ENCODE measurements at regions of chr15 and their contacts with region 1.

Region 1: DNA sequence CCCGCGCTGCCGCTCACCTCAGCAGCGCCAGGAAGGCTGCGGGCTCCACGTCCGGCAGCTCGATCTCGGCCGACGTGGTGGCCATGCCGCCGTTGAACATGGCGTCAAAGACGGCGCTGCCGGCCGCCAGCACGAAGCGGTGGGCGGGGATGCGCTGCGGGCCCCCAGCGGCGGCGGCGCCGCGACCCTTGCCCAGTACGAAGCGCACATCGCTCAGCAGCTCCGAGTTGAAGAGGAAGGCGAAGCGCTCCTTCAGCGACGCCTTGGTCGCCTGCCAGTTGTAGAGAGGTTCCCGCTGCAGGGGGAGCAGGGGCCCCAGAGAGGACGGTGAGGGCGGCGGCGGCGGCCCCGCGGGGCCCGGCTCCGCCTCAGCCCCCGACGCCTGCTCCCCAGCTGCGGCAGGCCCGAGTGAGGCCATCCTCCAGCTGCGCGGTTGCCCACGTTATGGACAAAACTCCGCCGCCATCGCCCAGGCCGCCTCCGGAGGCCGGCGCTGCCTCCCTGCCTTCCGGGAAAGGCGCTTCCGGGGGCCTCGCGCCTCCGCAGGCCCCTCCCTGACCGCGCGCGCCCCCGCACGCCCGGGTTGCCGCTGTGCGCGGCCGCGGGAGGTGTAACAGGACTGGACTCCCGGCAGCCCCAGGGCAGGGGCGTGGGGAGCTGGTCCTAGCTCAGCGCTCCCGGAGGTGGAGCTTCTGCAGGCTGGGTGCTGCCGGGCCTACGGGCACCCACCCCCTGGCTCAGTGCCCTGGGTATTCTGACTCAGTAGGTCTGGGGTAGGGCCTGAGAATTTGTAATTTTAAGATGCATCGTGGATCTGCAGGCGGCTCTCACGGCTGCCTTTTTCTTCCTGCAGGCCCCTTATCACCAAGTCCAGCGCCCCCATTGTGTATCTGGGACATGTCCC is at the start of gene BTBD1:
- DNase-seq: peak; percentile 96
- ATAC-seq: peak; percentile 98
- H3K4me3 Mint-ChIP-seq: peak within 1 kb of the TSS; percentile 79
- H3K27ac Mint-ChIP-seq: peak within 1 kb of the TSS; percentile 86
- H3K4me1 Mint-ChIP-seq: peaks cover 20% of the 10 kb centered on the region
- H3K27me3 Mint-ChIP-seq: no peaks in the 10 kb centered on the region
- total RNA-seq, gene BTBD1: 58.3 to 77.6 TPM

Region 2: GRCh38 chr15:82540055-82540983 is 526.7 kb before region 1 on chr15 and contains the start of gene RPS17:
- CTCF ChIA-PET with region 1: no interaction called
- POLR2A ChIA-PET with region 1: interaction called, 4 read pairs
- intact Hi-C with region 1: loop called (anchors 1 to 2 kb)
- DNase-seq: peak; percentile 99
- ATAC-seq: peak; percentile 93
- H3K4me3 Mint-ChIP-seq: peak within 1 kb of the TSS; percentile 96
- H3K27ac Mint-ChIP-seq: peak within 1 kb of the TSS; percentile 96
- H3K4me1 Mint-ChIP-seq: peaks cover 23% of the 10 kb centered on the region
- H3K27me3 Mint-ChIP-seq: no peaks in the 10 kb centered on the region
- total RNA-seq, gene RPS17: 2,882 to 3,294 TPM

Region 3: GRCh38 chr15:82709421-82710207 is 357.4 kb before region 1 on chr15 and contains the start of gene AP3B2:
- CTCF ChIA-PET with region 1: no interaction called
- POLR2A ChIA-PET with region 1: no interaction called
- intact Hi-C with region 1: loop called in 1 of 2 experiments (anchors 1 kb)
- DNase-seq: peak; percentile 85
- ATAC-seq: peak; percentile 97
- H3K4me3 Mint-ChIP-seq: peak within 1 kb of the TSS; percentile 52
- H3K27ac Mint-ChIP-seq: no peak within 1 kb of the TSS
- H3K4me1 Mint-ChIP-seq: no peaks in the 10 kb centered on the region
- H3K27me3 Mint-ChIP-seq: peaks cover 15% of the 10 kb centered on the region
- total RNA-seq, gene AP3B2: 0.39 to 0.59 TPM

Region 4: GRCh38 chr15:82832601-82833361 is 234.2 kb before region 1 on chr15:
- CTCF ChIA-PET with region 1: no interaction called
- POLR2A ChIA-PET with region 1: no interaction called
- intact Hi-C with region 1: loop called in 1 of 2 experiments (anchors 2 kb)
- DNase-seq: peak; percentile 72
- ATAC-seq: peak; percentile 92
- H3K4me3 Mint-ChIP-seq: no peak overlapping the region
- H3K27ac Mint-ChIP-seq: peak overlapping the region; percentile 7
- H3K4me1 Mint-ChIP-seq: peaks cover 34% of the 10 kb centered on the region
- H3K27me3 Mint-ChIP-seq: no peaks in the 10 kb centered on the region

Region 5: DNA sequence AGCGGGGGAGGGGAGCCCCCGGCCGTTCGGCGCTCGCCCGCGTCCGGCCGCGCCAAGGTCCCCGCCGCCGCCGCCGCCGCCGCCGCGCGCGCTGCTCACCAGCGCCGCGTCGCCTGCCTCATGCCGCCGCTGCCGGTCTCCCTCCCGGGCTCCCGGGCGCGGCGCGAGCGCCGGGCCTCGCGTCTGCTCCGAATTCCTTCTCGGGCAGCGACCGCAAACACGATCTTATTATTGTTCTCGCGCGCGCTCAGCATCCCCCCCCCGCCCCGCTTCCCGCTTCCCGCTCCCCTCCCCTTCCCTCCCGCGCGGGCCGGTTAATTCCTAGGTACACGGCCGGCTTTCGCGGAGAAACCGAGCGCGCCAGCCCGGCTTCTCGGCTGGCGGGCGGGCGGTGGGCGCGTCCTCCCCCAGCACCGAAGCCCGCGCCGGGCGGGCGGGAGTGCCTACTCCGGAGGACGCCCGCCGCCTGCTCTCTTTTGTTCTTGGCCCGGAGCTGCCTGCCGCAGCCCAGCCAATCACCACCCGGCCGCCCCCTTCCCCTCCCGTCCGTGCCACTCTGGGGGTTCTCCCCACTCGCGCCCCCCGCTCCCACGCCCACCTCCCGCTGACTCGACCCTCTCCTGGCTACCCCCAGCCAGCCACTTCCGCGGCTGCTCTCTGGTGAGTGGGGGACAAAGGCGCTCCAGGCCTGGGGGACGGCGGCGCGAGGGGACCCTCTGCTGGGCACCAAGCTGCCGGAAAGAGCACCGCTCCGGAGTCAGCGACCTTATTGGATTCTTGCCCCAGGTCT is 140.8 kb after region 1 on chr15 and contains the start of gene HDGFL3:
- CTCF ChIA-PET with region 1: no interaction called
- POLR2A ChIA-PET with region 1: no interaction called
- intact Hi-C with region 1: loop called in 1 of 2 experiments (anchors 2 kb)
- DNase-seq: peak; percentile 50
- ATAC-seq: peak; percentile 60
- H3K4me3 Mint-ChIP-seq: peak within 1 kb of the TSS; percentile 69
- H3K27ac Mint-ChIP-seq: no peak within 1 kb of the TSS
- H3K4me1 Mint-ChIP-seq: peaks cover 9% of the 10 kb centered on the region
- H3K27me3 Mint-ChIP-seq: peaks cover 25% of the 10 kb centered on the region
- total RNA-seq, gene HDGFL3: 5.0 to 7.4 TPM